ENCODE measurements at regions of chr17 and their contacts with region 1.

Region 1: GRCh38 chr17:1783834-1784611 is 22.2 kb downstream of the SERPINF1 start:
- DNase-seq: peak; percentile 88 to 93 (median 88)
- ATAC-seq: peak; percentile 79 to 82
- H3K4me3 ChIP-seq: no peak overlapping the region
- H3K27ac ChIP-seq: peak overlapping the region; percentile 94
- H3K4me1 ChIP-seq: peaks cover 26% of the 10 kb centered on the region
- H3K27me3 ChIP-seq: no peaks in the 10 kb centered on the region

Region 2: DNA sequence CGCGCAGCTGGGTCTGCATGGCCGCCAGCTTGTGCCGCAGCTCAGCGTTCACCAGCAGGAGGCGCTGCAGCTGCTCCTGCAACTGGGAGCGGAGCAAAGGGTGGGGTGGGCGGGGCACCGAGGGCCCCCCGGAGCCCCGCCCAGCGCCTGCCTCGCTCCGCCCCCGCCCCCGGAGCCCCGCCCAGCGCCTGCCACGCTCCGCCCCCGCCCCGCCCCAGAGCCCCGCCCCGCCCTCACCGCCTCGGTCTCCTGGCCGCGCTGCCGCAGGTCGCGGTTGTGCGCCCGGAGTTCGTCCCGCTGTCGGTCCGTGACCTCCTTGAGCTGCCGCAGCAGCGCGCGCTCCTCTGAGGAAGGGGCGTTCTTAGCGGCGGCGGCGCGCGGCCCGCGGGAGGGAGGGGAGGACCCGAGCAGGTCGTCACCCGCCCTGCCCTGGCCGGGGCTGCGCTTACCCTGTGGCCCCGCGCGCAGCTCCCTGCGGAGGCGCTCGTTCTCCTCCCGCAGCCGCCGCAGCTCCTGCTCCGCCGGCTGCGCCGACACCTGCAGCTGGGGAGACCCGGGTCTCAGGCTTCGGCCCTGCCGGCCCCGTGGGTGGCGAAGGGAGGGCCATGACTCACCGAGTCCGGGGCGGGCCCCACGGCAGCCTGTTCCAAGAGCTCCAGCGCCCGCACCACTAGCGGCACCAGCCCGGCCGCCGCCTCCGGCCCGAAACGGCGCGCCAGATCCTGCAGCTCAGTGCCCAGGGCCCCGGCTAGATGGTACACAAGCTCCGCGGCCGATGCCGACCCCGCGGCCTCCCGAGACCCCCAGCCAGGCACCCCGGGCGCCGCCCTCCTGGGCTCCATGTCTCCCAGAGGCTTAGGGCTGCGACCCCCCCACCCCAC is 134.8 kb before region 1 on chr17:
- intact Hi-C with region 1: loop called in 1 of 4 experiments (anchors 10 kb)
- DNase-seq: peak; percentile 92 to 99 (median 99)
- ATAC-seq: peak; percentile 77 to 79
- H3K4me3 ChIP-seq: peak overlapping the region; percentile 76
- H3K27ac ChIP-seq: peak overlapping the region; percentile 94
- H3K4me1 ChIP-seq: peaks cover 5% of the 10 kb centered on the region
- H3K27me3 ChIP-seq: no peaks in the 10 kb centered on the region

Region 3: DNA sequence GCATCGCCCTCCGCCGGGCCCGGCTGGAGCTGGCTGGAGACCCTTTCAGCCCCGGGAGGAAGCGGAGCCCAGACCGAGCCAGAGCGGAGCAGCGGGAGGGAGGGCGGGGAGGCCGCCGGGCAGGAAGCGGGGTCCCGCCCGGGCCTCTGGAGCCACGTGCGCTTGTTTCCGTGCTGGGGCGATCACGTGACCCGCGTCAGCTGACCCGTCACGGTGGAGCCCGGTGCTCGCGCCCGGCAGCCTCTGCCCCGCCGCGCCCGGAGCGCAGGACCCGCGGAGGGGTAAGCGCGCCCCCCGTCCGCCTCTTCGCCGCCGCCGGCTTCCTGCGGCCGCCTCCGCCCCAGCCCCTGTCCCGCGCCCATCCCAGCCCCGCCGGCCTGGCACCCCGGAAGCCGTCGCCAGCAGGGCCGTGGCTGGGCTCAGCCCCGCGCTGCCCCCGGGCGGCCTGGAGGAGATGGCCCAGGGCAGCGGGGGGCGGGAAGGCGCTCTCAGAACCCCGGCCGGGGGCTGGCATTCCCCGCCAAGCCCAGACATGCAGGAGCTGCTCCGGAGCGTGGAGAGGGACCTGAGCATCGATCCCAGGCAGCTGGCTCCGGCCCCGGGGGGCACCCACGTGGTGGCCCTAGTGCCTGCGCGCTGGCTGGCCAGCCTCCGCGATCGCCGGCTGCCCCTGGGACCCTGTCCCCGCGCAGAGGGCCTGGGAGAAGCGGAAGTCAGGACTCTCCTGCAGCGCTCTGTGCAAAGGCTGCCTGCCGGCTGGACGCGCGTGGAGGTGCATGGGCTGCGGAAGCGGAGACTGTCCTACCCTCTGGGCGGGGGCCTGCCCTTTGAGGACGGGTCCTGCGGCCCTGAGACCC is 59.3 kb before region 1 on chr17 and contains the start of gene WDR81:
- intact Hi-C with region 1: loop called (anchors 2 to 5 kb)
- DNase-seq: peak; percentile 95 to 98 (median 97)
- ATAC-seq: peak; percentile 84 to 89
- H3K4me3 ChIP-seq: peak within 1 kb of the TSS; percentile 74
- H3K27ac ChIP-seq: peak within 1 kb of the TSS; percentile 95
- H3K4me1 ChIP-seq: peaks cover 9% of the 10 kb centered on the region
- H3K27me3 ChIP-seq: no peaks in the 10 kb centered on the region
- total RNA-seq, gene WDR81: 9.2 to 11.2 (median 11.0) TPM